ENCODE measurements at regions of chr3 and their contacts with region 1.

Region 1: GRCh38 chr3:120417272-120417911 is 33.4 kb downstream of the FSTL1 start:
- DNase-seq: peak; percentile 95
- ATAC-seq: peak; percentile 99
- H3K4me3 Mint-ChIP-seq: peak overlapping the region; percentile 81
- H3K27ac Mint-ChIP-seq: peak overlapping the region; percentile 78
- H3K4me1 Mint-ChIP-seq: peaks cover 6% of the 10 kb centered on the region
- H3K27me3 Mint-ChIP-seq: no peaks in the 10 kb centered on the region
- CTCF ChIP-seq: peak; percentile 79

Region 2: GRCh38 chr3:120239644-120240043 is 177.7 kb before region 1 on chr3:
- CTCF ChIA-PET with region 1: interaction called, 131 read pairs
- POLR2A ChIA-PET with region 1: interaction called, 3 read pairs
- intact Hi-C with region 1: loop called (anchors 1 kb)
- DNase-seq: no peak
- ATAC-seq: no peak
- H3K4me3 Mint-ChIP-seq: no peak overlapping the region
- H3K27ac Mint-ChIP-seq: no peak overlapping the region
- H3K4me1 Mint-ChIP-seq: no peaks in the 10 kb centered on the region
- H3K27me3 Mint-ChIP-seq: peaks cover 21% of the 10 kb centered on the region
- CTCF ChIP-seq: no peak

Region 3: DNA sequence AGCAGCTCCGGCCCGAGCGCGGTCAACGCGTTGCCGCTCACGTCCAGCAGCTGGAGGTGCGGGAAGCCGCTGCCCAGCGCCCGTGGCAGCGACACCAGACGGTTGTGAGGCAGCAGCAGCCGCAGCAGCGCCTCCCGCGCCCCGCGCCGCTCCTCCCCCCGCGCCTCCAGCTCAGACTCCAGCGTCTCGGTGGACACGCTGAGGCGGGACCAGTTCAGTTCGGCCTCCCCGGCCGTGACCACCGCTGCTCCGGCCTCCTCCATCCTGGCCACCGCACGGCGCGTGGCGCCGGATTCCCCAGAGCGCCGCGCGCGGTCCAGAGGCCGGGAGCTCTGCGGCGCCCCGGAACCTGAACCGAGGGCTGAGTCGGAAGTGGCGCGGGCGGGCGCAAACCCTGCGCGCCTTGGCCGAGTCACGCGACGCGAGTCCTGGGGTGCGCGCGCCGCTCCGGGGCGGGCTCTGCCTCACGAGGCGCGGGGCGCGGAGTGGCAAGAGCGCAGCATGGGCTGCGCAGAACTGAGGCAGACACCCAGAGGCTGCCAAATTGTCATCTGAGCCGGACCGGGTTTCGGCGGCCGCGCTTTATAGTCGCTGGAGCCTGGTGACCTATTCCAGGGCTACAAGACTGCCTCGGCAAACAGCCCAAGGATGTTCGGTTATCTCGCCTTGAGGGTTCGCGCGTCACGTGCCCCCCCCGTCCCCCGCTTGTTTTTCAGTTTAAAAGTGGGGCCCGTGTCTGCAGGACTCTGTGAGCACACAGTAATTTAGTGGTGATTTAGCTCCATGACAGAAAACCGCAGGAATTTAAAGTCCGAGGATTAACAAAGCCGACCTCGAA is 68.2 kb before region 1 on chr3 and contains the start of gene LRRC58:
- CTCF ChIA-PET with region 1: interaction called, 27 read pairs
- POLR2A ChIA-PET with region 1: interaction called, 4 read pairs
- intact Hi-C with region 1: loop called (anchors 5 kb)
- DNase-seq: peak; percentile 90
- ATAC-seq: peak; percentile 93
- H3K4me3 Mint-ChIP-seq: peak within 1 kb of the TSS; percentile 93
- H3K27ac Mint-ChIP-seq: peak within 1 kb of the TSS; percentile 95
- H3K4me1 Mint-ChIP-seq: peaks cover 43% of the 10 kb centered on the region
- H3K27me3 Mint-ChIP-seq: peaks cover 7% of the 10 kb centered on the region
- CTCF ChIP-seq: no peak
- total RNA-seq, gene LRRC58: 29.1 to 30.7 TPM

Region 4: GRCh38 chr3:120404876-120405275 is 12.5 kb before region 1 on chr3:
- CTCF ChIA-PET with region 1: interaction called, 26 read pairs
- POLR2A ChIA-PET with region 1: no interaction called
- intact Hi-C with region 1: no loop called
- DNase-seq: no peak
- ATAC-seq: no peak
- H3K4me3 Mint-ChIP-seq: no peak overlapping the region
- H3K27ac Mint-ChIP-seq: no peak overlapping the region
- H3K4me1 Mint-ChIP-seq: no peaks in the 10 kb centered on the region
- H3K27me3 Mint-ChIP-seq: no peaks in the 10 kb centered on the region
- CTCF ChIP-seq: no peak

Region 5: DNA sequence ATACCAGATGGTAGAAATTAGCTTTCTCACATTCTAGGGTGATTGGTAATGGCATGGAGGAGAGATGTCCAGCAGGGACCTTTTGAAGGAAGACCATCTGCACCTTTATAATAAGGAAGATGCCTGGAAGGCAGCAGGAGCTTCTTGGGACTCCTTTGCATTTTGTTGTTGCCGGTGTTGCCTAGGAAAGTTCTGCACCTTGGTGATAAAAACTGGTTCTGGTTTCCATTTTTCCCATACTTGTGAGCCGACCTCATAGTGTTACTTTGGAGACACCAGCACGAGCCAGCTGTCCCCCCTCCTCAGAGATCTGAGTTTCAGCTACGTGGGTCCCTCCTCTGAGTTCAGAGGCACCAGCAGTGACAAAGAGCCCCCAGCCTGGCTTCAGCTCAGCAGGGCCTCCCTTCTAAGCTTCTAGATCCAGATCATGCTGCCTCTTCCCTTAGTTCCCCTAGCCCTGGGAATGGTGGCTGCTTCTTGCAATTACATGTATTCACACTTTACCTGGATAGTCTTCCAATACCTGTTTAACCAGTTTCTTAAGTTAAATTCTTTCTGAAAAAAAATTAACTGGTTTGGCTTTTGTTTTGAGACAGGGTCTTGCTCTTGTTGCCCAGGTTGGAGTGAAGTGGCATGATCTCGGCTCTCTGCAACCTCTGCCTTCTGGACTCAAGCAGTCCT is 51.4 kb after region 1 on chr3:
- CTCF ChIA-PET with region 1: interaction called, 12 read pairs
- POLR2A ChIA-PET with region 1: no interaction called
- intact Hi-C with region 1: no loop called
- DNase-seq: no peak
- ATAC-seq: no peak
- H3K4me3 Mint-ChIP-seq: no peak overlapping the region
- H3K27ac Mint-ChIP-seq: no peak overlapping the region
- H3K4me1 Mint-ChIP-seq: no peaks in the 10 kb centered on the region
- H3K27me3 Mint-ChIP-seq: peaks cover 10% of the 10 kb centered on the region
- CTCF ChIP-seq: no peak

Region 6: GRCh38 chr3:120497336-120497735 is 79.9 kb after region 1 on chr3:
- CTCF ChIA-PET with region 1: no interaction called
- POLR2A ChIA-PET with region 1: no interaction called
- intact Hi-C with region 1: no loop called
- DNase-seq: no peak
- ATAC-seq: no peak
- H3K4me3 Mint-ChIP-seq: no peak overlapping the region
- H3K27ac Mint-ChIP-seq: no peak overlapping the region
- H3K4me1 Mint-ChIP-seq: no peaks in the 10 kb centered on the region
- H3K27me3 Mint-ChIP-seq: no peaks in the 10 kb centered on the region
- CTCF ChIP-seq: no peak

Region 7: GRCh38 chr3:120795017-120795648 is 377.7 kb after region 1 on chr3:
- CTCF ChIA-PET with region 1: interaction called, 10 read pairs
- POLR2A ChIA-PET with region 1: no interaction called
- intact Hi-C with region 1: no loop called
- DNase-seq: peak; percentile 94
- ATAC-seq: peak; percentile 98
- H3K4me3 Mint-ChIP-seq: no peak overlapping the region
- H3K27ac Mint-ChIP-seq: no peak overlapping the region
- H3K4me1 Mint-ChIP-seq: peaks cover 8% of the 10 kb centered on the region
- H3K27me3 Mint-ChIP-seq: no peaks in the 10 kb centered on the region
- CTCF ChIP-seq: peak; percentile 76

Measured in activated CD8-positive, alpha-beta T cell treated with anti-CD3 and anti-CD28 coated beads for 36 hours (primary cell).